Left colon (tissue), 2 donors: ENCODE measurements at regions of chr20 and their contacts with region 1.

Region 1: DNA sequence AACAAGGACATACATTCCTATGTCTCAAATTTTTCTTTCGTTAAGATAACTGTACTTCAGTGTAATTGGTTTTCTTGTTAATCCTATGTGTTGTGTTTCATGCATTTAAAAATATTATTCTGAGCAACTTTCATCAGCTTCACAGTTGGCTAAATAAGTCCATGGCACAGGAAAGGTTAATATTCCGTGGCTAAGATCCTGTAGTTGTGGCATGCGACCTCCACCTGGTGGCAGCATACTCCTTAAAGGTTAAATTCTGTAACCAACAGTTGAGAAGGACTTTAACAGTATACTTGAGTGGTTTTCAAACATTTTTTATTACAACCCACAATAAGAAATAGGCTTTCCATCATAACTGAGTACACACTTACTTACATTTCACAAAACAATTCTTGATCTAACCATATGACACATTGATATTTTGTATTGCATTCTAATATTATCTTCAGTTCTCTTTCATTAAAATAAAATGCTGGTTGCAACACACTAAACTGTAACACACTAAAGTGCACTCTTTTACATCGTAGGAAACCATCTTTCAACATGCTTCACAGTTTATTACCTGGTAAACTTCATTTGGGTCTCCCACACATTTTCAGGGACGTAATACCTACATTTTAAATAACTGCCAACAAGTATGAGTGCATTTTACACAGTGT is 118.3 kb downstream of the SLX4IP start:
- DNase-seq: peak; percentile 50 to 77
- ATAC-seq: peak; percentile 83

Region 2: GRCh38 chr20:10667077-10667401 is 113.6 kb after region 1 on chr20:
- intact Hi-C with region 1: loop called in 1 of 2 experiments (anchors 10 kb)
- DNase-seq: no peak
- ATAC-seq: no peak

Region 3: DNA sequence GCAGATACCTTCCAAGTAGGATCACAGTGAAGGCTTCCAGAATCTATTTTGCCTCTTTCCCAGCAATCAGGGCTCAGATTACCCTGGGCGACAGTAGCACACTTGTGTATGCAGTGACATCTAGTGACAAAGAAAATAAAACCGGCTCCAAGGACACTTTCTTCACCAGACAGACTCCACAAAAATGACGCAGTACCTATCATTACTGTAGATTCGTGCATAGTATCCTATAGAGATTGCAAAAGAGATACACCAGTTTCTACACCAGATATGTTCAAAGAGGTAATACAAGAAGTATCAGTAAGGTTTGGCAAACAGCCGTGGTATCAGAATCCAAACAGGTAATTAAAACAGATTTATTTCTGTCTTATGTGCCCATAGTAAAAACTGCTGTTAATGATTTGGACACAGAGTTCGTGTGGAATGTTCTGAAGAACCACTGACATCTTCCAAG is 720.7 kb after region 1 on chr20:
- intact Hi-C with region 1: loop called in 1 of 2 experiments (anchors 10 kb)
- DNase-seq: peak in 1 of 2 donors; percentile 8
- ATAC-seq: peak; percentile 96